Right ventricle myocardium inferior (tissue), 1 donor: ENCODE measurements at regions of chr12 and their contacts with region 1.

Region 1: DNA sequence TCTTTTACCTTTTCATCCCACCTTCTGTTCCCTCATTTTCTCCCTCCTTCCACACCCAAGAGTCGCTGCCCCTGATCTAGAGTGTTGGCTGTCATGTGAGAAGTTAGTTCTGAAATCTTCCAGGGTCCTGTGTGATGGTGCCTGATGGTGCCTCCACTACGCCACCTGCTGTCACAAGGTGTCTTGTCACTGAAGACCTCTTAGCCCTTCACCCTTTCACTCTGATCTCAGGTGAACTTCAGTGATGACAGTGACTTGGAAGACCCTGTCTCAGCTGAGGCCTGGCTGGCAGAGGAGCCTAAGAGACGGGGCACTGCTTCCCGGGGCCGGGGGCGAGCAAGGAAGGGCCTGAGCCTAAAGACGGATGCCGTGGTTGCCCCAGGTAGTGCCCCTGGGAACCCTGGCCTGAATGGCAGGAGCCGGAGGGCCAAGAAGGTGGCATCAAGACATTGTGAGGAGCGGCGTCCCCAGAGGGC is 7.6 kb upstream of the PFDN5 start:
- DNase-seq: peak; percentile 73
- ATAC-seq: peak; percentile 75

Region 2: DNA sequence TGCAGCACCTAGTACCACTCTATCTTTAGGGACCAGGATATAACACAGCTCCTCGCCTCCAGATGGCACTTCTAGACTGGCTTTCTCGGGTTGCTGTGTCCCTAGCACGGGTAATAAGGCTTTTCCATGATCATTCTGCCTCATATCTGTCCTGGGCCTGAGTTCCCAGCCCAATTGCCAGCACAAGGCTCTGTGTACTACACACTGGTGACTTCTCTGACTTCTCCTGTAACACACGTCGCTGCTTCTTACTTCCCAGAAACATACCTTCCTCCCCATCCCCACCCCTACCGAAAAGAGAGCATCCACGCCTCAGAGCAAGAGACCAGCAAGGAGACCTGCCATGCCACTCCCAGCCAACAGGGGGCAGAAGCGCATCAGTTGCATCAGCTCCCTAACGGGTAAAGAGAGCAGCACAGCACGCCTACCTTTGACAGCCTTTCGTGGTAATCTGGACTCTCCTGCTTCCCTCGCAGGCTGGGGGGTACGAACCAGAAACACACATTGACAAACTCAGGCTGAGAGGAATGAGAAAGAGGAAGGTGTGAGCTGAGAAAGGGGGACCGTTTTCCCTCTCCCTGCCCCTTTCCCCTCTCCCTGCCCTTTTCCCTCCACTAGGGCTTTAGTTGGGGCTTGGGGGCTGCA is 128.5 kb before region 1 on chr12:
- intact Hi-C with region 1: loop called (anchors 2 kb)
- DNase-seq: peak; percentile 89
- ATAC-seq: peak; percentile 75

Region 3: GRCh38 chr12:53213348-53213747 is 74.4 kb before region 1 on chr12:
- intact Hi-C with region 1: loop called (anchors 1 kb)
- DNase-seq: peak; percentile 93
- ATAC-seq: peak; percentile 75